Heart right ventricle (tissue), 16 donors: ENCODE measurements at regions of chr6 and their contacts with region 1.

Region 1: GRCh38 chr6:131949909-131950766 is 1.0 kb downstream of the CCN2 start:
- DNase-seq: peak; percentile 74 to 77
- ATAC-seq: peak; percentile 60 to 84 (median 72)
- H3K4me3 ChIP-seq: peak overlapping the region; percentile 32 to 76 (median 73)
- H3K27ac ChIP-seq: peak overlapping the region; percentile 80 to 97 (median 92)
- H3K4me1 ChIP-seq: peaks cover 6 to 51% (median 23%) of the 10 kb centered on the region in 9 donors
- H3K27me3 ChIP-seq: peaks cover 0 to 69% (median 0%) of the 10 kb centered on the region in 7 donors
- CTCF ChIP-seq: peak; percentile 38 to 66 (median 54)

Region 2: GRCh38 chr6:130602151-130602770 is 1347.9 kb before region 1 on chr6:
- intact Hi-C with region 1: no loop called
- DNase-seq: no peak
- ATAC-seq: no peak
- H3K4me3 ChIP-seq: no peak overlapping the region
- H3K27ac ChIP-seq: no peak overlapping the region
- H3K4me1 ChIP-seq: no peaks in the 10 kb centered on the region
- H3K27me3 ChIP-seq: no peaks in the 10 kb centered on the region
- CTCF ChIP-seq: no peak

Region 3: DNA sequence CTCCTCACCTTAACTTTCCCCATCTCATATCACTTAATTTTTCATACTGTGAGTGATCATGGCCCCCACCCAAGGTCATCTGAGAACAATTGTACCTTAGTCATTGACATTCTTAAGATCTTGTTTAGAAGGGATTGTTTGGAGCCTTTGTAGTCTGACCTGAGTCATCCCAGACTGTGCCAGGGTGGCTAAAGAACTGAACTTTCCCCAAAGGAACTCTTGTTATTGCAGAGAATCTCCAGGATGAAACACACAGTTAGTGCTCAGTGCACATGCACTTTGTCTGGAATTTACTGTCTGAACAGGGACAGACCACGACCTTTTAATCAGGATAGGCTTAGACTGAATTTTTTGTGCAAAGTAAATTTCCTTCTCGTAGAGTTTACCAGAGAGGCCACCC is 113.6 kb after region 1 on chr6:
- intact Hi-C with region 1: loop called in 1 of 10 experiments (anchors 5 kb)
- DNase-seq: no peak
- ATAC-seq: peak in 5 of 8 donors; percentile 29 to 89 (median 60)
- H3K4me3 ChIP-seq: no peak overlapping the region
- H3K27ac ChIP-seq: peak overlapping the region in 2 of 10 donors; percentile 15 to 50
- H3K4me1 ChIP-seq: peaks cover 0 to 33% (median 6%) of the 10 kb centered on the region in 9 donors
- H3K27me3 ChIP-seq: no peaks in the 10 kb centered on the region
- CTCF ChIP-seq: no peak

Region 4: DNA sequence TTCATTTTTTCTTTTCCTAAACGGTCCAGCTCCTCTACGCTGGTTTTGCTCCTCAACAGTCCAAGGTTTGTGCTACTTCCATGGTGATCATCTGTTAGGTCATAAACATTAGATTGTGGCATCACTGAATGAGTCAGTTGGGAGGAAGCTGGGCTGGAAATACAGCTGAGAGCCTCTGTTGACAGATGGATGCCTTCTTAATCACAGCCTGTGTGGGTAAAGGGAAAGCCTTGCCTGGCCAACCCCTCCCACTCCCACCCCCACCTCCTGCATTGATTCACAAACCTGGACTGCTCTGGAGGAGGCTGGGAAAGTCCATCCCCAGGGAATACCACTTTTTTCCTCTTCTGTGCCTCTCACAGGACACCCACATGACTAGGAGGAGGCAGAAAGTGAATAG is 181.6 kb after region 1 on chr6:
- intact Hi-C with region 1: loop called in 3 of 10 experiments (anchors 10 kb)
- DNase-seq: peak; percentile 16 to 61
- ATAC-seq: peak; percentile 60 to 95 (median 86)
- H3K4me3 ChIP-seq: no peak overlapping the region
- H3K27ac ChIP-seq: peak overlapping the region; percentile 75 to 93 (median 84)
- H3K4me1 ChIP-seq: peaks cover 3 to 44% (median 36%) of the 10 kb centered on the region in 9 donors
- H3K27me3 ChIP-seq: no peaks in the 10 kb centered on the region
- CTCF ChIP-seq: no peak

Region 5: DNA sequence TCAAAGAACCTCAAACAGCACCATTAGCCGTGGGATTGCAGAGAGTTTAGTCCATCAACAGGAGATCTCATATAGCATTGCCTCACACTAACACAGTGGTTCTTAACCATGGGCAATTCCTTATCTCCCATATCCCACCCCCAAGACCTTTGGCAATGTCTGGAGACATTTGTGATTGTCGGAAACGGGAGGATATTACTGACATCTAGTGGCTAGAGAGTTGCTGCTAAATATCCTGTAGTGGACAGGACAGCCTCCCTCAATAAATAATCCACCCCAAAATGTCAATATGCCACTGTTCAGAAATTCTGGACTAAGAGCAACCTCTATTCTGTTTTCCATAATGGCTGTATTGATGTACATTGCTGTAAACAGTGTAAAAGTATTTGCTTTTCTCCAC is 211.1 kb after region 1 on chr6:
- intact Hi-C with region 1: loop called in 8 of 10 experiments (anchors 5 to 10 kb)
- DNase-seq: peak in 1 of 2 donors; percentile 18
- ATAC-seq: peak in 7 of 8 donors; percentile 63 to 80 (median 74)
- H3K4me3 ChIP-seq: no peak overlapping the region
- H3K27ac ChIP-seq: no peak overlapping the region
- H3K4me1 ChIP-seq: peaks cover 0 to 3% (median 0%) of the 10 kb centered on the region in 9 donors
- H3K27me3 ChIP-seq: no peaks in the 10 kb centered on the region
- CTCF ChIP-seq: peak in 8 of 9 donors; percentile 50 to 80 (median 61)

Region 6: DNA sequence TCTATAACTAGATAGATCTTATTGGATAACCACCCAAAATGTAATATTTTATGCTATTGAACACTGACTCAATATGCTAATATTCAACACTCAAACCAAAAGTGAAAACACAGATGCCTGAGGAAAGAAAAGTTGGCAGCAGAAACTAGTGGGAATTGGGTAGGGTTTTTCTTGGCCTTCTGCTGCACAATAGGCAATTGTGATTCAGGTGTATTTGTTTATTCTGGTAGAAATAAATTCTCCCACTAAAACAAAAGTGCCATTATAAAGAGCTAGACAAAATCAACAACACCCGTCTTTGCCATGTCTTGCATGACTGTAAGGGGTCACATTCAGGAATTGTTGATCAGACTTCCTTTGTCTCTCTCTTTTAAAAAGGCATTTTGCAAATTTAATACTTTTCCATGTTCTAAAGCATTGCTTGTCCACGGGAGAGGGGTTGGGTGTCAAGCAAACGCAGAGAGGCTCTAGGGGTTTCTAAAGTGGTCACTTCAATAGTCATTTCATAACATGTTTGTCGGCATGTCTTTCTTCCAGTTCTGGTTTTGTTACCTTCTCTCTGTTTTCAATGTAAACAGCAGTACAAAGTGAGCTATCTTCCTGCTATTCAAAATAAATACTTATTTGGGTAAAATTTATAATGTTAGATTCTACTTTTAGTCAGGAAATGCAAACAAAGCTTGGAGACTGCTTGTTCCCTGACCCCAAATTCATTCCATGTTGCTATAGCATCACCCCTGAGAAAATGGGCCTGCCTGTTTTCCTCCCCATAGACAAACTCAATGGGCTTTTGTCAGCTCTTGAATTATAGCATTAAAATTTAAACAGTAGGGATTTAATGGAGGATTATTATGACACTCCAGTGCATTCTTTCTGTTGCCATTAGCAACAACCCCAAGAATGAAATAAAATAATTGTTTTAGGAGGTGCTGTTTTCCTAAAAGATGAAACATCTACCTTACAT is 218.1 kb after region 1 on chr6:
- intact Hi-C with region 1: loop called in 7 of 10 experiments (anchors 5 to 10 kb)
- DNase-seq: no peak
- ATAC-seq: no peak
- H3K4me3 ChIP-seq: no peak overlapping the region
- H3K27ac ChIP-seq: no peak overlapping the region
- H3K4me1 ChIP-seq: peaks cover 0 to 10% (median 0%) of the 10 kb centered on the region in 9 donors
- H3K27me3 ChIP-seq: no peaks in the 10 kb centered on the region
- CTCF ChIP-seq: no peak

Region 7: GRCh38 chr6:132202574-132202973 is 252.4 kb after region 1 on chr6:
- intact Hi-C with region 1: loop called in 1 of 10 experiments (anchors 5 kb)
- DNase-seq: peak in 1 of 2 donors; percentile 65
- ATAC-seq: peak in 7 of 8 donors; percentile 88 to 96 (median 93)
- H3K4me3 ChIP-seq: no peak overlapping the region
- H3K27ac ChIP-seq: peak overlapping the region in 9 of 10 donors; percentile 51 to 89 (median 75)
- H3K4me1 ChIP-seq: peaks cover 0 to 23% (median 13%) of the 10 kb centered on the region in 9 donors
- H3K27me3 ChIP-seq: no peaks in the 10 kb centered on the region
- CTCF ChIP-seq: no peak